ENCODE measurements at regions of chr4 and their contacts with region 1.

Region 1: DNA sequence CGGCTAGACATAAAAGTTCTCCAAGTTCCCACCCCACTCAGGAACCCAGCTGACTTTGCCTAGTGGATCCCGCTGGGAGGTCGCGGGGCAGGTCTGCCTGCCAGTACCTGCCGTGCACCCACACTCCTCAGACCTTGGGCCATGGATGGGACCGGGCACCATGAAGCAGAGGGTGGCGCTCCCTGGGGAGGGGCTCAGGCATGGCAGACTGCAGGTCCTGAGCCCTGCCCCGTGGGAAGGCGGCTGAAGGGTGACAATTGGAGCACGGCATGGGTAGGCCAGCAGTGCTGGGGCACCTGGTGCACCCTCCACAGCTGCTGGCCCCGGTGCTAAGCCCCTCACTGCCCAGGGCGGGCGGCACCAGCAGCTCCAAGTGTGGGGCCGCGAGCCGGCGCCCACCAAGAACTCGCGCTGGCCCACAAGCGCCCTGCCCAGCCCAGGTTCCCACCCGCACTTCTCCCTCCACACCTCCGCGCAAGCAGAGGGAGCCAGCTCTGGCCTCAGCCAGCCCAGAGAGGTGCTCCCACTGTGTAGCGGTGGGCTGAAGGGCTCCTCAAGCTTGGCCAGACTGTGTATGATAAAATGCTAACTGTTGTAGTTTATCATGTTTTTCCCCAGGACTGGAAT is 63.1 kb downstream of the UGT2A2 start:
- DNase-seq: peak in 1 of 5 donors; percentile 49
- ATAC-seq: no peak
- H3K4me3 ChIP-seq: no peak overlapping the region
- H3K27ac ChIP-seq: no peak overlapping the region
- H3K4me1 ChIP-seq: no peaks in the 10 kb centered on the region
- H3K27me3 ChIP-seq: no peaks in the 10 kb centered on the region
- CTCF ChIP-seq: no peak
- POLR2A ChIP-seq: no peak

Region 2: GRCh38 chr4:69549651-69550050 is 26.7 kb before region 1 on chr4:
- intact Hi-C with region 1: loop called in 1 of 10 experiments (anchors 2 kb)
- DNase-seq: no peak
- ATAC-seq: no peak
- H3K4me3 ChIP-seq: no peak overlapping the region
- H3K27ac ChIP-seq: no peak overlapping the region
- H3K4me1 ChIP-seq: no peaks in the 10 kb centered on the region
- H3K27me3 ChIP-seq: no peaks in the 10 kb centered on the region
- CTCF ChIP-seq: no peak
- POLR2A ChIP-seq: no peak

Measured in heart left ventricle (tissue), 16 donors.